ENCODE measurements at regions of chr16 and their contacts with region 1.

Region 1: GRCh38 chr16:48623304-48624016 is 13.5 kb upstream of the N4BP1 start:
- DNase-seq: peak; percentile 65 to 85
- H3K4me3 ChIP-seq: peak overlapping the region; percentile 34 to 35
- H3K27ac ChIP-seq: peak overlapping the region; percentile 33 to 72
- H3K4me1 ChIP-seq: peaks cover 0 to 6% of the 10 kb centered on the region in 2 donors
- H3K27me3 ChIP-seq: no peaks in the 10 kb centered on the region
- CTCF ChIP-seq: peak; percentile 95 to 99 (median 98)
- POLR2A ChIP-seq: no peak

Region 2: DNA sequence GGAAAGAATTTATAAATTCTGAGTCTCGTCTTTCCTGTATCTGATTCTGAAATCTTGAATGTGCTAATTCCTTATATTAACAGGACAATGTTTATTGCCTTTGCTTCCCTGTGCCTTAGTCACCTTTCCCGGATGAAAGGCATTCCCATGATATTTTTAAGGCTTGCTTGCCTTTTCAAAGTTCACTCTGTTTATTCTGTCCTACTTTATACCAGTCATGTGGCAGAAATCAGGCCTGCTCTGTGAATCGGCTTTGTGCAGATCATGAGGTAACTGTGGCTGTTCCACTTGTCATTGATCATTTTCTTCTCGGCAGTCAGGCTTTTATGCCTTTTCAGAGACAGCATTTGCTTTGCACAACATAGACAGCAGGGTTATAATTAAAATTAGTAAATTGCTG is 347.4 kb before region 1 on chr16:
- intact Hi-C with region 1: no loop called
- DNase-seq: no peak
- H3K4me3 ChIP-seq: no peak overlapping the region
- H3K27ac ChIP-seq: peak overlapping the region in 1 of 2 donors; percentile 32
- H3K4me1 ChIP-seq: no peaks in the 10 kb centered on the region
- H3K27me3 ChIP-seq: no peaks in the 10 kb centered on the region
- CTCF ChIP-seq: no peak
- POLR2A ChIP-seq: no peak

Region 3: DNA sequence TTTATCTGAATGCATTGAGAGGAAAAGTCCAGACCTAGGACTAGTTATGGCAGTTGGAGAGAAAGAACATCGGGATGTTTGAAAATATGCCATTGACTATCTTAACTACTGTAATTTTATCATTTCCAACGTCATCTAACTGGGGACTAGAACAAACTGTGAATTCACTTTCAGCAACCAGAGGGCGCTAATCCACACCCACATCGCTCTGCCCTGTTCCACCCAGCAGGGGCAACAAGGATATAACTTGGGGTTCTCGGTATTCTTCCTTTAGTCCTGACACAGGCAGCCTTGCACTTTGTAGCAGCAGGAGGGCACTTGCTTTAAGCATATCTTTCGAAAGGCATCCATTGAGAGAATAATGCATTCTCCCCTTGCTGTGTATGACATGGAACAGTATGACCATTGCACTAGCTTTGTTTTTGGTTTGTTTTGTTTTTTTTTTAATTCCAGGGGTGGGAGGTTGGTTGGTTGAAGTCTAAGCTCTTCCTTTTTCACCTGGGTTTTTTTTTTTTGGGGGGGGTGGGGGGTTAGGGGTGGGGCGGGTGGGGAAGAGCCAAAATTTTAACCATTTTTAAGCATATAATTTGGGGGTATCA is 269.8 kb before region 1 on chr16:
- intact Hi-C with region 1: loop called (anchors 10 kb)
- DNase-seq: peak; percentile 41 to 50
- H3K4me3 ChIP-seq: no peak overlapping the region
- H3K27ac ChIP-seq: no peak overlapping the region
- H3K4me1 ChIP-seq: no peaks in the 10 kb centered on the region
- H3K27me3 ChIP-seq: no peaks in the 10 kb centered on the region
- CTCF ChIP-seq: peak; percentile 74 to 81 (median 76)
- POLR2A ChIP-seq: no peak

Region 4: DNA sequence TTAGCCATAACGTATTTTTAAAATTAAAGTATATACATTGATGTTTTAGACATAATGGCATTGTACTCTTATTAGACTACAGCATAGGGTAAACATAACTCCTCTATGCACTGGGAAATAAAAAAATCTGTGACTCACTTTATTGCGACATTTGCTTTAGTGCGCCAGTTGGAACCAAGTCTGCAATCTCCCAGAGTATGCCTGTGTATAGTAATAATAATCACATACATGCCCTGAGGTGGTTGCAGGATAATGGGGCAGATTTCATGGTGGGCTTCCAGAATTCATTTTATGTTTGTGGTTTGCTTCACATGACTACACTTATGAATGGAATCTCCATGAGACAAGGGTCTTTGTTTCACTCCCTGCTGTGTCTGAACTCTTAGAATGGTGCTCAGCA is 53.4 kb after region 1 on chr16:
- intact Hi-C with region 1: no loop called
- DNase-seq: no peak
- H3K4me3 ChIP-seq: no peak overlapping the region
- H3K27ac ChIP-seq: no peak overlapping the region
- H3K4me1 ChIP-seq: no peaks in the 10 kb centered on the region
- H3K27me3 ChIP-seq: no peaks in the 10 kb centered on the region
- CTCF ChIP-seq: no peak
- POLR2A ChIP-seq: no peak